BJ (cell line): ENCODE measurements at regions of chr4 and their contacts with region 1.

Region 1: DNA sequence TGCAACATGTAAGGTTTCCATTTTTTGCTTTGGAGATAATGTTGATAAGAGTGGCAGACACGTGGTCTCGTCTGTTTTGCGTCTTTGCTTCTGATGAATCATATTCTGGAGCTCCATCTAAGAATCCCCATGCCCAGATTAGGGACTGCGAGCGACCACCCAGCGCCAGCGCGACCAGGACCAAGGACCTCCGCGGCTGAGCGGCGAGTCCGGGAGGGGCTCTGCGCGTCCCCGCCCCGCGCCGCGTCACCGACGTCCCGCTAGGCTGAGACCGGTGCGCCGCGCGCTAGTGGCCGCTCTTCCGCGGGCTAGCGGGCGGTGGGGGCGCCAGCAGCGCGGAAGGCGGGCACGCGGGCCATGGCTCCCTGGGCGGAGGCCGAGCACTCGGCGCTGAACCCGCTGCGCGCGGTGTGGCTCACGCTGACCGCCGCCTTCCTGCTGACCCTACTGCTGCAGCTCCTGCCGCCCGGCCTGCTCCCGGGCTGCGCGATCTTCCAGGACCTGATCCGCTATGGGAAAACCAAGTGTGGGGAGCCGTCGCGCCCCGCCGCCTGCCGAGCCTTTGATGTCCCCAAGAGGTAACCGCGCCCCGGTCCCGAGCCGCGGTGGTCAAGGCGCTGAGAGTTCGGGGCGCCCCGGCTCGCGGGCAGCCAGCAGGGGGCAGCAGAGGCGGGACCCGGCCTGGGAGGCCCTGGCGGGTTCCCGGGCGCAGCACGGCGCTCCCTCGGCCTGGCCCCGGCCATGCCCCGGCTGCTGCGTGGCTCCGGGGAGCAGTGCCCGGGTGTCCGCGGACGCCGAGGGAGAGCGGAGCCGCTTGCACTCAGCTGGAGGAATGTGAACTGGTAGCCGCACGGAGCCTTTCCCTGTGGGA is at the start of gene SRD5A3:
- DNase-seq: no peak
- H3K4me3 ChIP-seq: peak within 1 kb of the TSS; percentile 74
- H3K27me3 ChIP-seq: 0 out of 2 replicates have a peak, but pooled peaks cover 2% of the 10 kb centered on the region
- CTCF ChIP-seq: peak; percentile 65
- polyA plus RNA-seq, gene SRD5A3: 15.2 and 24.0 TPM in 2 replicates

Region 2: DNA sequence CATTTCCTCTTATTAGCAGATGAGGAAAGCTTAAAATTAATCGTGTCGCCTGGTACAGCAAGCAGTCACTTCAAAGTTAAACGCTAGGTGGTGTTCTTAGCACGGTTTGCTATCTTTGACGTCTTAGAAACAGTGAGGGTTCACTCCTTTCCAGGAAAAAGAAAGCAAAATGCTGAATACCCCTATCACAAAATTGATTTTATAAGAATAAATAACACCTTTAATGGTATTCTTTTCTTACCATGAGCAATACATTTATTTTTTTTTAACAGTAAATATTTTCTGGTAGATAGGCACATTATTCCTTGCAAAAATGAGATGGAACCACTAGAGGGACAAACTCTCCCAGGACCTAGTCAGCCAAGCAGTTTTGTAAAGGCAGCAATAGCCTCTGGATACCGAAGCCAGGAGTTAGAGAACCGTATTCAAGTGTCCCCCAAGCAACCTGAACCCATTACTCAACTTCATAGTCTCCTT is 374.7 kb before region 1 on chr4:
- CTCF ChIA-PET with region 1: interaction called, 11 read pairs
- POLR2A ChIA-PET with region 1: no interaction called
- DNase-seq: no peak
- H3K4me3 ChIP-seq: no peak overlapping the region
- H3K27me3 ChIP-seq: peaks cover 2% of the 10 kb centered on the region; the same call in 1 of the 2 replicates
- CTCF ChIP-seq: peak; percentile 61

Region 3: DNA sequence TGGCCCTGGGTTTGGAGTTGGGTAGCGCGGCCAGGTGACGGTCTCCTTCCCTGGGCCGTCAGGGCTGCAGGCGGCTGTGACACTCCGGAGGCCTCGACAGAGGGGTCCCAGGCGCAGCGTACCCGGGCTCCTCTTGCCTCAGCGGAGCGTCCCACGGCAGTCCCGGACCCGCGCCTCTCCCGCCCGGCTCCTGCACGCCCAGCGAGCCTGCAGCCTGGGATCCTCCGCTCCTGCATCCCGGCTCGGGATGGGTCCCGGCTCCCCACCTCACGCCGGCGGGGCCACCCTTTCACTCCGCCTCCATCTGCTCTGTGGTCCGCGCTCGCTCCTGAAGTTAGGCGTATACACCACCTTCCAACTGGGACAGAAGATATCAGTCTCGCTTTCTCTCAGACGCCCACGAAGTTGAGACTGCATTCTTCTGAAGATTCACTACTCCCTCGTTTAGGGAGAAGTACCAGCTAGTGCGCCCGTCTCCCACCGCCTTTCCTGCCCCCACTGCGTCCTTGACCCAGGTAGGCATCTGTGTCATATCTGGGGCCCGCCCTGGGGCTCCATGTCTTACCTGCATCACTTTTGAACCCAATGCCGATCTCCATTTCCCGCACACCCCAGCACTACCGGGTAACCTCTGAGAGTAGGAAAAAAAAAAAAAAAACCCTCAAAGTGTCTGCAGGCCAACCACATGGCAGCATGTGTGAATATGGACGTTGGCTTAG is 188.5 kb before region 1 on chr4:
- CTCF ChIA-PET with region 1: no interaction called
- POLR2A ChIA-PET with region 1: no interaction called
- DNase-seq: no peak
- H3K4me3 ChIP-seq: no peak overlapping the region; the same call in 1 of the 2 replicates
- H3K27me3 ChIP-seq: peaks cover 4% of the 10 kb centered on the region
- CTCF ChIP-seq: no peak

Region 4: DNA sequence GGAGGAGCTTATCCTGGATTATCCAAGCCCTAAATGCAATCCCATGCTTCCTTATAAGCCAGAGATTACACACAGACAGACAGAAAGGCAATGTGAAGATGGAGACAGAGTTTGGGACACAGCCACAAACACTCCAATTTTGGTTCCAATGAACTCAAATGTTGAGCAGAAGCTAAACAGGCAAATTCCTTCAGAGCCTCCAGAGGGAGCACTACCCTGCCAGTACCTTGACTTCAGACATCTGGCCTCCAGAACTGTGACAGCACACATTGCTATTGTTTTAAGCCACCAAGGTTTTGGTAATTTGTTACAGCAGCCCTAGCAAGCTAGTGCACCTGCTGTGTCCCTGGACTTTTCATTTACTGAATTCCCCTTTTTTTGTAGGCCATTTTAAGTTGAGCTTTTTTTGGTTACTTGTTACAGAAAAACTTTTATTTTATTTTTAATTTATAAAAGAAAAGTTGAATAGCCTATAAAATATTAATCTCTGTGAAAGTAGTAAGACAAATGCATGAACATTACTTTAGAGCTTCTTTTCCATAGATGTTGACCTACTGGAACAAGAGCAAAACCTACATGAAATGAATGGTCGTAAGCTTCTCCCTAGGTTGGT is 33.6 kb before region 1 on chr4:
- CTCF ChIA-PET with region 1: interaction called, 14 read pairs
- POLR2A ChIA-PET with region 1: no interaction called
- DNase-seq: peak; percentile 9
- H3K4me3 ChIP-seq: no peak overlapping the region
- H3K27me3 ChIP-seq: peaks cover 1% of the 10 kb centered on the region; the same call in 1 of the 2 replicates
- CTCF ChIP-seq: peak; percentile 87

Region 5: DNA sequence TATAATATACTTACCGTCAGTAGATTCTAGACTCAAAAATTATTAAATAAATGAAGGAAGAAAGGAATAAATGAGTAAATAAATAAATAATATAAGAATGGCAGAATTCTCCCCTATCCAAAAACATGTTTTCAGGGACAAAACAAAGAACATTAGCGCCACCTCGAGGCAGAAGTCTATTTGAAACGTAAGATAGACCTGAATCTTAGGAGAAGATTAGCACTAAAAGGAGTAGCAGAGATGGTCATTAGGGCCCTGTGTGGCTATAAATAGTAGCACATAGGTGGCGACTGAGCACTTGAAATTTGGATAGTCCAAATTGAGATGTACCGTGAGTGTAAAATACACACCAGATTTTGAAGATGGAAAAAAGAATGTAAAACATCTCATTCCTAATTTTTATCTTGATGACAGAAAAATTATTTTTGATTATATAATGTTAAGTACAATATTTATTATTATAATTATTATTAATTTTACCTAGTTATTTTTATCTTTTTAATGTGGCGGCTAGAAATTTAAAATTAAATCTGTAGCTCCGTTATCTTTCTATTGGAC is 24.4 kb before region 1 on chr4:
- CTCF ChIA-PET with region 1: interaction called, 17 read pairs
- POLR2A ChIA-PET with region 1: interaction called, 3 read pairs
- DNase-seq: no peak
- H3K4me3 ChIP-seq: no peak overlapping the region
- H3K27me3 ChIP-seq: peaks cover 9% of the 10 kb centered on the region; the same call in 1 of the 2 replicates
- CTCF ChIP-seq: peak; percentile 56

Region 6: DNA sequence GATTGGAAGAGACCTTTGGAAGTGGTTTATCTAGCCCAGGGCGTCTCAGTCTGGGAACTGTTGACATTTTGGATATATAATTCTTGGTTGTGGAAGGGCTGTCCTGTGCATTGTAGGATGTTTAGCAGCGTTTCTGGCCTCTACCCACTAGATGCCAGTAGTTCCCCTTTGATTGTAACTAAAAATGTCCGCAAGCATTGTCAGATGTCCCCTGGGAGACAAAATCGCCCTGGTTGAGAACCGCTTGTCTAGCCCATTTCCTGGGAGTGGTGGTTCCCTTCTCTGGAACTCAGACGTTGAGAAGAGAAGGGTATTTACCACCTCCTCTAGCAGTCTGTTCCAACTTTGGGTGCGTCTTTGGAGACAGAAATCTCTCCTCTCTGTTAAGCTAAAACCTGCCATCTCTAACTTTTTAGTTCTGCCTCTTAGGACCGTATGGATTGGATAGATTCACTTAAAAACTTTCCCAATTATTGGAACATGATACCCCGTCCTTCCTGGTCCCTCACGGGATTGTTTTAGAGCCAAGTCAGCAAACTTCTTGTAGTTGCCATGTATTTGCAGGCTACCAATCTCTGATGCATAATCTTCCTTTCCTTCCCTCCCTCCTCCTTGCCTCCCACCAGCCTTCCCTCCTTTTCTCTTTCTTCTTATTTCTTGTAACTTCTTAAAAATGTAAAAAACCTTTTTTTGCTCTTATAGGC is 63.4 kb after region 1 on chr4:
- CTCF ChIA-PET with region 1: interaction called, 10 read pairs
- POLR2A ChIA-PET with region 1: no interaction called
- DNase-seq: no peak
- H3K4me3 ChIP-seq: no peak overlapping the region
- H3K27me3 ChIP-seq: no peaks in the 10 kb centered on the region
- CTCF ChIP-seq: peak; percentile 46

Region 7: GRCh38 chr4:55546756-55547465 is 200.7 kb after region 1 on chr4 and contains the start of gene CLOCK:
- CTCF ChIA-PET with region 1: interaction called, 14 read pairs
- POLR2A ChIA-PET with region 1: interaction called, 3 read pairs
- DNase-seq: no peak
- H3K4me3 ChIP-seq: peak within 1 kb of the TSS; percentile 56
- H3K27me3 ChIP-seq: no peaks in the 10 kb centered on the region
- CTCF ChIP-seq: peak; percentile 48
- polyA plus RNA-seq, gene CLOCK: 14.5 and 21.2 TPM in 2 replicates

Region 8: DNA sequence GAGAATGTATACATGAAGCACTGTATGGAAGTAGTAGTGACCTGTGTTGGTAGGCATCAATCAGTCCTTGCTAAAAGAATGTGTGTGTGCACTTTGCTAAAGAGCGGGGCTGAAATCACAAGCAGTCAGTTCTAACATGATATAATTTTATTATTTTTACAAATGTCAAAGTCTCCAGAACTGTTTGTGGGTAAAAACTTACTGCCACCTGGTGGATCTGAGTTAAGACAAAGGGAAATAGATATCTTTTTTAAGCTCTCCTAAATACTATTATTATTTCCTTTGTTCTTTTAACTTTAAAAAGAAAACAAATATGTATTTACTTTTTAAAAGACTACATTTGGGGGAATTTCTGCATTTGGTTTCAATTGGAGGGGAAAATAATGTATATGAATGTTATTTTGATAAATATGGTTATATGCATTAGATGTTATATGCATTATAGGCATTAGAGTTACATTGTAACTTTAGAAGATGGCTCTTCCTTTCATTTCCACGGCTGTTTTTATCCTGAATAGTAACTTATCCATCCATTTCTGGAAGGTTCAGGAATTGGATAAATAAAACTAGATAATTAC is 208.3 kb after region 1 on chr4:
- CTCF ChIA-PET with region 1: interaction called, 13 read pairs
- POLR2A ChIA-PET with region 1: no interaction called
- DNase-seq: no peak
- H3K4me3 ChIP-seq: no peak overlapping the region
- H3K27me3 ChIP-seq: 0 out of 2 replicates have a peak, but pooled peaks cover 2% of the 10 kb centered on the region
- CTCF ChIP-seq: peak; percentile 51